GM12878 (cell line): ENCODE measurements at regions of chr18 and their contacts with region 1.

Region 1: DNA sequence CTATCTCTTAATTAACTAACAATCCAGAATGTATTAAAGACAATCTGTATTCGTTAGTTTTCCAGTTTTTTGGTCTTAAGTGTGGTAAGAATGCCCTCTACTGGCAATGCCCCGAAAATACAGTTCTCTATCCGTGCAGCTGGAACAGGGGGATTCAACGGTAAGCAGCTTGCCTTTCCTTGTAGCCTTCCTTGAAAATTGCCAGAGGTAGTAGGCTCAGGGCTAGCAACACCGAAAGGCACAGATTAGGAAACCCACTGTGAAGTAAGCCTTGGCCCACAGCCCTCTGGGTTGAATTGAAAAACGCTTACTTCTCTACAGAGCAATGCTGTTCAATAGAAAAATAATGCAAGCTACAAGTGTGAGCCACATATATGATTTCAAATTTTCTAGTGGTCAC is 17.1 kb upstream of the VPS4B start:
- DNase-seq: no peak
- ATAC-seq: peak; percentile 78
- H3K4me3 ChIP-seq: no peak overlapping the region
- H3K27ac ChIP-seq: no peak overlapping the region
- H3K4me1 ChIP-seq: no peaks in the 10 kb centered on the region
- H3K27me3 ChIP-seq: no peaks in the 10 kb centered on the region
- CTCF ChIP-seq: peak; percentile 82 to 86 (median 86)
- EP300 ChIP-seq: no peak
- POLR2A ChIP-seq: no peak
- RAD21 ChIP-seq: peak; percentile 85

Region 2: DNA sequence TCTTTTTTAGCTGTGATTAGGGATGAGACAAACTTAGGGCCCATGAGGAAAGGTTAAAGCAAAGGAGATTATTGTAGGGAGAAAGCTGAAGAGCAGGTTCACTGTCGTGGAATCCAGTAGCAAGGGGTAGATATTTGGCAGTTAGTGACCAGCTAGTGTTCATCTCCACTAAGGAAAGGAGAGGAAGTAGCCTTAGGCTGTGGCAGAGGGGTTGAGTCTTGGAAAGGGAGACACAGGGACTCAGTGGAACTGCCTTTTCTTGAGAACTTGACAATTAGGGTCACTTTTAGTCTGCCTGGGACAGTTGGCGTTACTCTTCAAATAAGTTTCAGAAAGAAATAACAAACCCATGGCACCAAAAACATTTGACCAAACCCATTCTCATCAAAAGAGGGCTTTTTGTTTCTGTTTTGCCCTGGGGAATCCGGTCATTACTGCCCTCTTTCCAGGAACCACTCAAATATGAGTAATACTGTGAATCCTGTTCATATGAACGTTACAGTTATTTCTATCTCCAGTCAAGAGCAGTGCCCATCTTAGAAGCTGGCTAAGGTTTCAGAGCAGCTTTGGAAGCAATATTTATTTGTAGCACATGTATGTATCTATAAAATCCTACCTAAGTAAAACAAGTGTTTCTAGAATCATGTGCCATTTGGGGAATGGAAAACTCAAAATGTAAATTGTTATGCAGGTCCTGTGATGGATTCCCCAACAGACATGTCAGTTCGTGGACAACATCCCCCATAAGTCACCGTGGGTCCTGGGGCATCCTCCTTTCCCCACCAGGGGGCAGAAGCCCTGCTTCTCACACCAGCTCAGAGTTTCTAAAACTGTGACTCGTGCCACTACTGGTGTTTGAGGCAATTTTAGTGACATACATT is 801.3 kb before region 1 on chr18:
- CTCF ChIA-PET with region 1: interaction called, 14 read pairs
- POLR2A ChIA-PET with region 1: no interaction called
- RAD21 ChIA-PET with region 1: interaction called, 11 read pairs
- SMC1A ChIA-PET with region 1: interaction called, 6 read pairs
- in situ Hi-C with region 1: no loop called
- intact Hi-C with region 1: no loop called
- DNase-seq: no peak
- ATAC-seq: peak; percentile 98
- H3K4me3 ChIP-seq: no peak overlapping the region
- H3K27ac ChIP-seq: no peak overlapping the region
- H3K4me1 ChIP-seq: 0 out of 2 replicates have a peak, but pooled peaks cover 6% of the 10 kb centered on the region
- H3K27me3 ChIP-seq: no peaks in the 10 kb centered on the region
- CTCF ChIP-seq: peak; percentile 74 to 84 (median 82)
- EP300 ChIP-seq: no peak
- POLR2A ChIP-seq: no peak
- RAD21 ChIP-seq: peak; percentile 65

Region 3: GRCh38 chr18:62982600-62983251 is 456.6 kb before region 1 on chr18:
- CTCF ChIA-PET with region 1: interaction called, 10 read pairs
- POLR2A ChIA-PET with region 1: no interaction called
- RAD21 ChIA-PET with region 1: no interaction called
- SMC1A ChIA-PET with region 1: interaction called, 11 read pairs
- in situ Hi-C with region 1: no loop called
- intact Hi-C with region 1: no loop called
- DNase-seq: peak; percentile 7
- ATAC-seq: peak; percentile 88
- H3K4me3 ChIP-seq: no peak overlapping the region
- H3K27ac ChIP-seq: no peak overlapping the region
- H3K4me1 ChIP-seq: no peaks in the 10 kb centered on the region
- H3K27me3 ChIP-seq: no peaks in the 10 kb centered on the region
- CTCF ChIP-seq: peak; percentile 75 to 82 (median 78)
- EP300 ChIP-seq: no peak
- POLR2A ChIP-seq: no peak
- RAD21 ChIP-seq: peak; percentile 98

Region 4: DNA sequence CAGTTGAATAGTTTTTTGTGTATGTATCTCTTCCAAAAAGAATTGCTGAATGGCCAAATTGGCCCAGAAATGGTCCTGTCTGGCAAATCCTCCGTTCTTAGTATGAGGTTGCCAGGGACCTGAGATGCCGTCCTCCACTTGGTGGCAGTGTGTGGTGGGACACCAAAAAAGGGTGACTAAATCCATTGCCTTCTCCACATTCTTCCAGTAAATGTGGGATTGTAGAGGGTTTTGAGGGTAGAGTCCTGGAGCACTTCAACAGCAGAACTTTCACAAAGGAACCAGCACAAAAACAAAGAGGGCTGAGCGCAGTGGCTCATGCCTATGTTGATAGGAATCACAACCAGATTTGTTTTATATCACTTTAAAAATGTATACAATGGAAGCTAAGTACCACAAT is 319.7 kb before region 1 on chr18:
- CTCF ChIA-PET with region 1: interaction called, 12 read pairs
- POLR2A ChIA-PET with region 1: no interaction called
- RAD21 ChIA-PET with region 1: interaction called, 5 read pairs
- SMC1A ChIA-PET with region 1: interaction called, 8 read pairs
- in situ Hi-C with region 1: no loop called
- intact Hi-C with region 1: no loop called
- DNase-seq: no peak
- ATAC-seq: peak; percentile 78
- H3K4me3 ChIP-seq: no peak overlapping the region
- H3K27ac ChIP-seq: no peak overlapping the region
- H3K4me1 ChIP-seq: no peaks in the 10 kb centered on the region
- H3K27me3 ChIP-seq: no peaks in the 10 kb centered on the region
- CTCF ChIP-seq: peak; percentile 49 to 65 (median 52); a peak in 5 of 6 replicates
- EP300 ChIP-seq: no peak
- POLR2A ChIP-seq: no peak
- RAD21 ChIP-seq: peak; percentile 70

Region 5: GRCh38 chr18:63329431-63330145 is 109.7 kb before region 1 on chr18:
- CTCF ChIA-PET with region 1: interaction called, 15 read pairs
- POLR2A ChIA-PET with region 1: no interaction called
- RAD21 ChIA-PET with region 1: no interaction called
- SMC1A ChIA-PET with region 1: interaction called, 4 read pairs
- in situ Hi-C with region 1: no loop called
- intact Hi-C with region 1: loop called (anchors 5 kb)
- DNase-seq: no peak
- ATAC-seq: no peak
- H3K4me3 ChIP-seq: no peak overlapping the region
- H3K27ac ChIP-seq: no peak overlapping the region
- H3K4me1 ChIP-seq: no peaks in the 10 kb centered on the region
- H3K27me3 ChIP-seq: no peaks in the 10 kb centered on the region
- CTCF ChIP-seq: no peak
- EP300 ChIP-seq: no peak
- POLR2A ChIP-seq: no peak
- RAD21 ChIP-seq: no peak

Region 6: DNA sequence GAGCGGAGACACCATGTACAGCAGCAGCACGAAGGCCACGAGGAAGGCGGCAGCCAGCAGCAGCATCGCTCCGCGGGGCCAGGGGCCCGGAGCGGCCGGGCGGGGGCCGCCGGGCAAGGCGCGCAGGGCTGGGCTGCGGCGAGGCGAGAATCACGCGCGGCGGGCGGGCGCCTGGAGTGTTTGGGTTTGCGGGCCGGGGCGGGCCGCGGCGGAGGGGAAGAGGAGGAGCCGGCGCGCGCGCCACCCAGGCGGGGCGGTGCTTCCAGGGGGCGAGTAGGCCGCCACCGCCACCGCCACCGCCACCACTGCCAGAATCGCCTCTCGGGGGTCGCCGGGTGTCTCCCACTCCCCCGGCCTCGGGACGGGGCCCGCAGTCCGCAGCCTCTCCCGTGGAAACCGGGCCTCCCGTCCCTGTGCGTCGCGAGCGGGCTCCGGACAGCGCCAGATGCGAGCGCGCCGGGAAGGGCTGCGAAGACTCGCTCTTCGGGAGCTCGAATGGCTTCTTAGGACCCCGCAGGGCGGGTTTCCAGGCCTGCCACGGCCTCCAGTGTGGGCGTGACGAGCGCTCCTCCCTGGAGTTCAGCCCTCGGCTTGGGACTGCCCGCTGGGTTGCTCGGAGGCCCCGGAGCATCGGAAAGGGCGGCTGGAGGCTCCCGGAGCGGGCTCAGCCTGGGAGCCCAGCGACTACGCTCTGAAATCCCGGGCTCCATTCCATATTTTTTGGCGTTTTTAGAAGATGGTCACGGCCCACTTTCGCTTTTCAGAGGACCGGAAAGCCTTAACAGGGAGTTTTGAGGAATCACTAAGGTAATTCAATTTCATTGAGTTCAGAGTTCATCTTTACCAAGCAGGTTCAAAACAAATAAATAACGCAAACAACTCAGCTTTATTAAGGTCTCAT is 72.0 kb before region 1 on chr18 and contains the start of gene KDSR:
- CTCF ChIA-PET with region 1: interaction called, 8 read pairs
- POLR2A ChIA-PET with region 1: no interaction called
- RAD21 ChIA-PET with region 1: interaction called, 5 read pairs
- SMC1A ChIA-PET with region 1: interaction called, 10 read pairs
- in situ Hi-C with region 1: no loop called
- intact Hi-C with region 1: no loop called
- DNase-seq: peak; percentile 53
- ATAC-seq: peak; percentile 92
- H3K4me3 ChIP-seq: peak within 1 kb of the TSS; percentile 93
- H3K27ac ChIP-seq: peak within 1 kb of the TSS; percentile 84
- H3K4me1 ChIP-seq: no peaks in the 10 kb centered on the region
- H3K27me3 ChIP-seq: no peaks in the 10 kb centered on the region
- CTCF ChIP-seq: no peak
- EP300 ChIP-seq: no peak
- POLR2A ChIP-seq: peak; percentile 84
- RAD21 ChIP-seq: no peak
- polyA plus RNA-seq, gene KDSR: 5.2 to 7.8 TPM

Region 7: GRCh38 chr18:63427558-63427957 is 11.8 kb before region 1 on chr18:
- CTCF ChIA-PET with region 1: interaction called, 17 read pairs
- POLR2A ChIA-PET with region 1: interaction called, 3 read pairs
- RAD21 ChIA-PET with region 1: interaction called, 7 read pairs
- SMC1A ChIA-PET with region 1: interaction called, 11 read pairs
- in situ Hi-C with region 1: no loop called
- intact Hi-C with region 1: no loop called
- DNase-seq: no peak
- ATAC-seq: no peak
- H3K4me3 ChIP-seq: no peak overlapping the region
- H3K27ac ChIP-seq: no peak overlapping the region
- H3K4me1 ChIP-seq: no peaks in the 10 kb centered on the region
- H3K27me3 ChIP-seq: 0 out of 4 replicates have a peak, but pooled peaks cover 0 to 2% of the 10 kb centered on the region in 2 experiments
- CTCF ChIP-seq: no peak
- EP300 ChIP-seq: no peak
- POLR2A ChIP-seq: no peak
- RAD21 ChIP-seq: no peak